ENCODE measurements at regions of chr10 and their contacts with region 1.

Region 1: DNA sequence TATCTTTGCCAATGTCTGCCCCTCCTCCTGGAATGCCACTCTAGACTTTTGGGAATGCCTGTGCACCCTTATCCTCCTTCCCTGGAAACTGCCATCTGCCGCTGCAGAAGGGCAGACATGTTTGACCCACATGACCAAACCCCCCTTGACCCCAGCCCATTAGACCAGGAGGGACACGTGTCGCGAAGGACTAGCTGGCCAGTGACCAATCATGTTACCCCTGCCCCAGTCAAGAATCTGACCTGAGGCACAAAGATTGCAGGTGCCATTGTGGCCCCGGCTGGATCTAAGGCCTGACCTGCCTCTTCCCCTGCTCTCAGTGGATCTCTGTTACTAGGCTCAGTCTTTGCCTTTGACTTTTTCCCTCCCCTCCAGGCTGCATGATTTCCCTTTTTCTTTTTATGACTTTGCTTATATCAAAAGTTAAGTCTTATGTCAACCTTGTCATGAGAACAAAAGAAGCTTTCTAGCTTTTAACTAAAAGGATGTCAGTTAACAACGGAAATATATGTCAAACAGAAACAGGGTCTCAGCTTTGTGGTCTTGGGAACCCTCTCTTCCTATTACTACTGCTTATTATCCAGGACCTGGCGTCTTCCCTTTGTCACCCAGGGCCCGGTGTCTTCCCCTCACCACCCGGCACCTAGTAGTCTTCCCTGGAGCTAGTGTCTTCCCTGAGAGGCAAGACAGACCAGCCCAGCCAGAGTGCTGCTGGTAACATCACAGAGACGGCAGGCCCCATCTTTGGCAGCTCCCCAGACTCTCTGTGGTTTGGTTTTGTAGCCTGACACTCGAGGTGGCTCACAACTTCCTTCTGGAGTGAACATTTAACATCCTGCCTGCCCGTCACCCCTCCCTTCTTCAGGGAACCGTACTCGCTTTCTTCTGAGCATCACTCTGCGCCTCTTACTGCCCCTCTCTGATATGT is 24.4 kb upstream of the PPIF start:
- DNase-seq: peak; percentile 84
- H3K4me3 Mint-ChIP-seq: peak overlapping the region; percentile 46
- H3K27ac Mint-ChIP-seq: peak overlapping the region; percentile 97
- H3K4me1 Mint-ChIP-seq: peaks cover 72% of the 10 kb centered on the region
- H3K27me3 Mint-ChIP-seq: no peaks in the 10 kb centered on the region

Region 2: DNA sequence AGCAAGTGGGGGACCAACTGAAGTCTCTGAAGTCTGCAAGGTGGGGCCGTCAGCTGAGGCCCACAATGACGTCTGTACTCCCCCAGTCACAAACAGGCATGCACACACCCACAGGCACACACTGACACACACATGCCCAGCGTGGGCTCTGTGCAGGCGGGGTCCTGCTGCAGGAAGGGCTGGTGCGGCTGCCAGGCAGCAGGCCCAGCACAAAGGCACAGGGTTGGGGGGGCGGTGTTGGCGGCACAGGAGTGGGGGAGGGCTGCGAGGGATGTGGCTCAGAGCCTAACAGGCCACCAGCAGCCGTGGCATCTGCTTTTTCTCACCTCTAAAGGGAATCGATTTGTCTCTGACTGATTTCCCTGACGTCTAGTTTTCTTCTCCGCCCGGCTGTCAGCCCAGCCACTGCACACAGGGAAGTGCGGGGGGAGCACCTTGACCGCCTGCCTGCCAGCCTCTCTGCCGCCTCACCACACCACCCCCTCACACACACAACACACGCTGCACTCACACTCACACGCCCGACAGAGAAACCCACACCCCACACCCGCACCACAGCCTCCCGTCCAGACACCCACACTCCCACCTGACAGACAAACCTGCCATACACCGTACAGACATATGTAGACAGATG is 297.6 kb before region 1 on chr10:
- CTCF ChIA-PET with region 1: no interaction called
- POLR2A ChIA-PET with region 1: no interaction called
- DNase-seq: no peak
- H3K4me3 Mint-ChIP-seq: no peak overlapping the region
- H3K27ac Mint-ChIP-seq: no peak overlapping the region
- H3K4me1 Mint-ChIP-seq: peaks cover 12% of the 10 kb centered on the region
- H3K27me3 Mint-ChIP-seq: no peaks in the 10 kb centered on the region

Region 3: GRCh38 chr10:79242620-79243152 is 80.2 kb before region 1 on chr10:
- CTCF ChIA-PET with region 1: no interaction called
- POLR2A ChIA-PET with region 1: interaction called, 17 read pairs
- DNase-seq: peak; percentile 74
- H3K4me3 Mint-ChIP-seq: peak overlapping the region; percentile 77
- H3K27ac Mint-ChIP-seq: peak overlapping the region; percentile 79
- H3K4me1 Mint-ChIP-seq: peaks cover 74% of the 10 kb centered on the region
- H3K27me3 Mint-ChIP-seq: no peaks in the 10 kb centered on the region